MCF 10A (cell line): ENCODE measurements at regions of chrX and their contacts with region 1.

Region 1: GRCh38 chrX:87517571-87518141 is at the start of gene KLHL4:
- DNase-seq: peak; percentile 66
- H3K4me3 Mint-ChIP-seq: peak within 1 kb of the TSS; percentile 78
- H3K27ac Mint-ChIP-seq: peak within 1 kb of the TSS; percentile 74
- H3K4me1 Mint-ChIP-seq: peaks cover 10% of the 10 kb centered on the region
- H3K27me3 Mint-ChIP-seq: peaks cover 15% of the 10 kb centered on the region
- CTCF ChIP-seq: no peak
- total RNA-seq, gene KLHL4: 8.7 and 9.8 TPM in 2 replicates

Region 2: DNA sequence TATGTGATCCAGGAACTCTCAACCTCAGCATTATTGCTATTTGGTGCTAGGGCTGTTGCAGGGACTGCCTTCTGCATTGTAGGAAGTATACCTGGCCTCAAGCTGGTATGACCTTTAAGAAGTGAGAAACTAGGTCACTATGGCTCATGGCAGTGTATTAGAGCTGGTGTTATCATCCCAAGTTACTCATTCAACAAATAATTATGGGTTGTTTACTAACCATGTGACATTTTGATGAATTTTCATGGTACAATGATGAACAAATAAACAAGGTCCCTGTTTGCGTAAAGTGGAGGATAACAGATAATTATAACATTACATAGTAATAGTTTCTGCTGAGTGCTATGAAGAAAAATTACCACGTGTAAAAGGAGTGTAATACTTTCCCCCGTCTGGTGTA is 25.1 kb before region 1 on chrX:
- CTCF ChIA-PET with region 1: no interaction called
- POLR2A ChIA-PET with region 1: no interaction called
- intact Hi-C with region 1: no loop called
- DNase-seq: no peak
- H3K4me3 Mint-ChIP-seq: no peak overlapping the region
- H3K27ac Mint-ChIP-seq: no peak overlapping the region
- H3K4me1 Mint-ChIP-seq: peaks cover 5% of the 10 kb centered on the region
- H3K27me3 Mint-ChIP-seq: peaks cover 5% of the 10 kb centered on the region
- CTCF ChIP-seq: no peak

Region 3: DNA sequence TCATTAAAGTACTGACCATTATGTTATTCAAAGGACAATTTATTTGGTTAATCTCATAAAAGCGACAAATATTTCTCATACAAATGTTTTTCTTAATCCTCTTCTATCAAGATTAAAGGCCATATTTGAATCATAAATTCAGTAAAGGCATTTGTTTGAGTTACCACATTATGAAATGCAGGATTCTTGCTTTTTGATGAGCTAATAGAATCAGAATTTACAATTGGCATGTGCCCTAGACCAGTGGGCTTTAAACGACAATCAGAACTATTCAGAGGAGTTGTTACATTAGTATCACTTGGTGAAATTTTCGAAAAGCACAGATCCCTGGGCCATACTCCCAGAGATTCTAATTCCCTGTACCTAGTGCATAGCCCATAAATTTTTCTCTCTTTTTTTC is 55.3 kb after region 1 on chrX:
- CTCF ChIA-PET with region 1: no interaction called
- POLR2A ChIA-PET with region 1: interaction called, 3 read pairs
- intact Hi-C with region 1: loop called (anchors 1 kb)
- DNase-seq: peak; percentile 15
- H3K4me3 Mint-ChIP-seq: no peak overlapping the region
- H3K27ac Mint-ChIP-seq: peak overlapping the region; percentile 69
- H3K4me1 Mint-ChIP-seq: peaks cover 17% of the 10 kb centered on the region
- H3K27me3 Mint-ChIP-seq: peaks cover 15% of the 10 kb centered on the region
- CTCF ChIP-seq: no peak